ENCODE measurements at regions of chr5 and their contacts with region 1.

Region 1: DNA sequence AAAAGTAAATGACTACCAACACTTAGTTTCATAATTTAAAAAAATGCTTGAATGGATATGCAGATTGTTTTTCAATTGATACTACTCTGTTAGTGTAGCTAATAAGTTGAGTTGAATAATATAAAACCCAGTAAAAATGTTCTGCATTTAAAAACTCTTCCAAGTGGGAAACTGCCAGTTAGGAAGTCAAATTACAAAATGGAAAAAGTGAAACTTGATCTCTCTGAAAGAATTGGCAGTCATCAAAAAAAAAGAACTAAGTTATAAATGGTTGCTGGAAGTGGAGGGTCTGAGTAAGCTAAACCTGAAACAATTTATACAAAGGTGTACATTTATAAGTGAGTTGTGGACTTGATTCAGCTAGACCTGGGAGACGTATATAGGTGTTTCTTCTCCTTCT is 52.4 kb downstream of the VCAN start:
- DNase-seq: no peak

Region 2: DNA sequence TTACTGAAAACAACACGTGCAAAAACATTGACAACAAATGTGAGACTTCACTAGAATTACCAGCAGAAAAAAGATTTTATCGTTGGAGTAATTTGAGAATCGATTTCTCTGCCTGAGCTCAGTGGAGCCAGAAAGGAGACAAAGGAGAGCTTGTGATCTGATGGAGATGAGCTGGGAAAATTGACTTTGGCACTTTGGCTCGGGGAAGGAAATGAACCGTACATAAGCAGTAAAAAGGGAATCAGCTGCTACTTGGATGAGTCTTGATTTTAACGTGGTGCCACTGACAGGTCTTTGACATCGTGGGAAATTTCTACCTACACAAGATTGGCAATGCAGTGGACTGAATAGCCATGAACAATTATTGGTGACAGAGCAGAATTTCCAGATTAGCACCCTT is 1001.0 kb before region 1 on chr5:
- intact Hi-C with region 1: no loop called
- DNase-seq: no peak

Region 3: GRCh38 chr5:83608122-83608521 is 84.2 kb after region 1 on chr5:
- intact Hi-C with region 1: no loop called
- DNase-seq: no peak

Region 4: DNA sequence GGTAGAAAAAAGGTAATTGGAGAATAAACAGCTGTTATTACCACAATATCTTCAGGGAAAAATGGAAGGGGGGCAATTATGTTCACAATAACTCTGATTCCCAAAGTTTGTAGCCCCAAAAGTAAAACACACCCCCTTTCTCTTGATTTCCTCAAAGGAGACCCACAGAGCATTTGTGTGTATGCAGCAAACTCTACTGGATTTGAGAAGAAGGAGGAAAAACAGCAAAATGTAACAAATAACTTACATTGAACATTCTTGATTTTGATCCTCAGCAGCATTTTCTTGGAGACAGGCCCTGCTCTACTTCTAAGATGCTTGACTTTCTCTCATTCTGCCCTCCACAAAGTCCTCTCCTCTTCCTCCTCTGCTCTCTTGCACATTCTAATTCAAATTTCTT is 1281.5 kb after region 1 on chr5:
- intact Hi-C with region 1: no loop called
- DNase-seq: no peak

Region 5: DNA sequence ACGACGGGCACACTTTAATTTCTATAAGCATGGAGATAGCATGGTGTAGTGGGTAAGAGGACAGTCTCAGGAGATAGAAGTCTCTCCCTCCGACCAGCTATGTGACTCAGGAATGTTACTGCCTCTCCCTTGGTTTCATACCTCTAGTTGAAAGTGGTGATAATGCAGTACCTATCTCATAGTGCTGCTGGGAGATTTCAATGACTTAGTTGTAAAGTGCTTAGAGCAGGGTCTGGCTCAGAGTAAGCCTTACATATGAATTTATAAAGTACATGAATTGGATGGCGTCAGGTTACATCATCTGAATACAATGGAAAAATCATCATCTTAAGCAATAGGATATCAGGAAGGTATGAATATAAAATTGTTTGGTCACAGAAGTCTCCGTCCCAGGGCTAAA is 1813.5 kb after region 1 on chr5:
- intact Hi-C with region 1: loop called in 1 of 2 experiments (anchors 10 kb)
- DNase-seq: no peak